SK-N-SH (cell line): ENCODE measurements at regions of chr2 and their contacts with region 1.

Region 1: GRCh38 chr2:44955593-44956392 is 14.3 kb downstream of the SIX3 start:
- DNase-seq: peak; percentile 94
- H3K4me3 ChIP-seq: peak overlapping the region; percentile 38; a peak in 3 of 4 replicates
- H3K27ac ChIP-seq: no peak overlapping the region
- H3K4me1 ChIP-seq: peaks cover 0 to 17% of the 10 kb centered on the region in 2 experiments; a peak in 1 of 4 replicates
- H3K27me3 ChIP-seq: no peaks in the 10 kb centered on the region
- CTCF ChIP-seq: peak; percentile 94
- EP300 ChIP-seq: no peak
- RAD21 ChIP-seq: peak; percentile 99

Region 2: GRCh38 chr2:44361330-44362206 is 594.2 kb before region 1 on chr2 and contains the starts of genes CAMKMT and PREPL:
- CTCF ChIA-PET with region 1: interaction called, 21 read pairs
- POLR2A ChIA-PET with region 1: interaction called, 4 read pairs
- DNase-seq: peak; percentile 99
- H3K4me3 ChIP-seq: peak within 1 kb of the TSS; percentile 89 to 91
- H3K27ac ChIP-seq: peak within 1 kb of the TSS; percentile 95 to 99
- H3K4me1 ChIP-seq: peaks cover 9 to 10% of the 10 kb centered on the region in 2 experiments; a peak in 2 of 4 replicates
- H3K27me3 ChIP-seq: no peaks in the 10 kb centered on the region
- CTCF ChIP-seq: 0 out of 2 replicates have a peak, but pooled peaks have one; percentile 7
- EP300 ChIP-seq: no peak; a peak in 1 of 4 replicates
- RAD21 ChIP-seq: 0 out of 2 replicates have a peak, but pooled peaks have one; percentile 19
- polyA plus RNA-seq, gene CAMKMT: 5.9 and 6.2 TPM in 2 replicates
- polyA plus RNA-seq, gene PREPL: 22.6 and 32.8 TPM in 2 replicates

Region 3: GRCh38 chr2:44462934-44463849 is 492.6 kb before region 1 on chr2:
- CTCF ChIA-PET with region 1: interaction called, 55 read pairs
- POLR2A ChIA-PET with region 1: no interaction called
- DNase-seq: no peak
- H3K4me3 ChIP-seq: no peak overlapping the region
- H3K27ac ChIP-seq: no peak overlapping the region
- H3K4me1 ChIP-seq: peaks cover 0 to 8% of the 10 kb centered on the region in 2 experiments; a peak in 1 of 4 replicates
- H3K27me3 ChIP-seq: no peaks in the 10 kb centered on the region
- CTCF ChIP-seq: no peak
- EP300 ChIP-seq: no peak
- RAD21 ChIP-seq: no peak

Region 4: GRCh38 chr2:44549095-44549463 is 406.7 kb before region 1 on chr2:
- CTCF ChIA-PET with region 1: interaction called, 23 read pairs
- POLR2A ChIA-PET with region 1: no interaction called
- DNase-seq: no peak
- H3K4me3 ChIP-seq: peak overlapping the region; percentile 5 to 18; a peak in 2 of 4 replicates
- H3K27ac ChIP-seq: peak overlapping the region; percentile 75 to 92; a peak in 3 of 4 replicates
- H3K4me1 ChIP-seq: peaks cover 46 to 47% of the 10 kb centered on the region in 2 experiments
- H3K27me3 ChIP-seq: no peaks in the 10 kb centered on the region
- CTCF ChIP-seq: no peak
- EP300 ChIP-seq: peak; percentile 30 to 85; a peak in 3 of 4 replicates
- RAD21 ChIP-seq: no peak

Region 5: GRCh38 chr2:44707945-44708660 is 247.7 kb before region 1 on chr2:
- CTCF ChIA-PET with region 1: interaction called, 48 read pairs
- POLR2A ChIA-PET with region 1: no interaction called
- DNase-seq: no peak
- H3K4me3 ChIP-seq: no peak overlapping the region
- H3K27ac ChIP-seq: peak overlapping the region in 1 of 2 experiments; percentile 100; a peak in 2 of 4 replicates
- H3K4me1 ChIP-seq: peaks cover 0 to 74% of the 10 kb centered on the region in 2 experiments; a peak in 2 of 4 replicates
- H3K27me3 ChIP-seq: no peaks in the 10 kb centered on the region
- CTCF ChIP-seq: no peak
- EP300 ChIP-seq: no peak
- RAD21 ChIP-seq: no peak

Region 6: DNA sequence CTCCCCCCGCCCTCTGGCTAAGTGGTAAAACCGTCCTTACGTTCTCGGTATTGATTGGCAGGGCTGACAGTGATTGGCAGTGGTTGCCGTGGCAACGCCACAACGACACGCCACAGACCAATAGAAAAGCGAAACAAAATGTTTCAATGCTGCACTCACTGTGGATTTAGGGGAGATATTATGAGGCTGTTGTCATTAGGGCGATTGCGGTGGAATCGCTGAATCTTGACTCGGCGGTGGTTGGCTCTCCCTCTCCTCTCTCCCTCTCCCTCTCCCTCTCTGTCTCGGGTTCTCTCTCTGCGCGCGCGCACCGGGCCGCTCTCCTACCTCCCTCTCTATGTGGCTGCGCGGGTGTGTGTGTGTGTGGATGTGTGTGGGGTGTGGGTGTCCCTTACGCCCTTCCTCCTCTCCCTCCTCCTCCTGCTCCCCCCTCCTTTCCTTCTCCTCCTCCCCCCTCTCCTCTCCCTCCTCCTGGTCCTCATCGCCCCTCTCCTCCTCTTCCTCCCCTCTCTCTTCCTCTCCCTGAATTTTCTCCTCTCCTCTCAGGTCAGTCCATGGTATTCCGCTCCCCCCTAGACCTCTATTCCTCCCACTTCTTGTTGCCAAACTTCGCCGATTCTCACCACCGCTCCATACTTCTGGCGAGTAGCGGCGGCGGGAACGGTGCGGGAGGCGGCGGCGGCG is 14.1 kb before region 1 on chr2 and contains the start of gene SIX3:
- CTCF ChIA-PET with region 1: interaction called, 38 read pairs
- POLR2A ChIA-PET with region 1: interaction called, 4 read pairs
- DNase-seq: peak; percentile 89
- H3K4me3 ChIP-seq: peak within 1 kb of the TSS; percentile 56 to 60
- H3K27ac ChIP-seq: peak within 1 kb of the TSS in 1 of 2 experiments; percentile 92; a peak in 2 of 4 replicates
- H3K4me1 ChIP-seq: peaks cover 0 to 42% of the 10 kb centered on the region in 2 experiments; a peak in 2 of 4 replicates
- H3K27me3 ChIP-seq: peaks cover 74% of the 10 kb centered on the region
- CTCF ChIP-seq: no peak
- EP300 ChIP-seq: peak in 1 of 2 experiments; percentile 21; a peak in 1 of 4 replicates
- RAD21 ChIP-seq: no peak
- polyA plus RNA-seq, gene SIX3: 0.58 and 0.67 TPM in 2 replicates